IMR-90 (cell line): ENCODE measurements at regions of chr13 and their contacts with region 1.

Region 1: DNA sequence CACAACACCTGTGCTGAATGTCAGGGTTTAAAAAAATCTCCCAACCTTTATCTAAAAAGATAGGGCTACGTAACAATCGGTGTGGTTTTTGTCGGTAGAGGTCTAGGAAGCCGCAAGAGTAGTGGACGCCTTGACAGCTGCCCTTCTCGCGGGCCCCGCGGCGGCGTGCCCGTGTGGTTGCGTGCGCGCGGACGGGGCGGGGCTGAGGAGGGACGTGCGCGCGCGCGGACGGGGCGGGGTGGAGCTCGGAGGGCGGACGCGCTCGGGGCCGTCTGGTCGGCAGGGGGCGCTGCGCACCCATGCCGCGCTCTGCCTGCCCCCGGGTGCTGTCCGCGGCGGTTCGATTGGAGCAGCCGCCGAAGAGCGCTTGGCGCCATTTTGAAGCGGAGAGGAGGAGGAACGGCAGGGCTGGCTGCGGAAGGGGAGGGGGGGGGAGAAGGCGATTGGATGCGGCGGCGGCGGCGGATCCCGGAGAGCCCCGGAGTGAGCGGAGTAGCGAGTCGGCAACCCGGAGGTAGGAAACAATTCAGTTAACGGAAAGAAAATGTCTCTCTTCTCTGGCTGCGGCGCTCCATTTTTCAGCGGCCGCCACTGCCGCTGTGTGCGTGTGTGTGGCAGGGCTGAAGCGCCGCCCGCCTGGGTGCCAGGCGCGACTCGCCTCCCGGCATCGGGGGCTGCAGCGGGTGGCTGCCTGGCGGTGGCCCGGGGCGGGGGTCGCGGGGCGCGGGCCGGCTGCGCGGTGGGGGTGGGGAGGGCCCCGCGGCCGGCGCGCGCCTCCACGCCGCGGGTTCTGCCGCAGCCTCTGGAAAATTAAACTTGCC is at the start of gene PDS5B:
- DNase-seq: peak; percentile 92
- ATAC-seq: peak; percentile 91
- H3K4me3 ChIP-seq: peak within 1 kb of the TSS; percentile 65
- H3K27ac ChIP-seq: peak within 1 kb of the TSS; percentile 86
- H3K4me1 ChIP-seq: peaks cover 6% of the 10 kb centered on the region
- H3K27me3 ChIP-seq: no peaks in the 10 kb centered on the region
- CTCF ChIP-seq: peak; percentile 97
- POLR2A ChIP-seq: no peak
- RAD21 ChIP-seq: peak; percentile 90
- total RNA-seq, gene PDS5B: 20.1 and 26.7 TPM in 2 replicates

Region 2: DNA sequence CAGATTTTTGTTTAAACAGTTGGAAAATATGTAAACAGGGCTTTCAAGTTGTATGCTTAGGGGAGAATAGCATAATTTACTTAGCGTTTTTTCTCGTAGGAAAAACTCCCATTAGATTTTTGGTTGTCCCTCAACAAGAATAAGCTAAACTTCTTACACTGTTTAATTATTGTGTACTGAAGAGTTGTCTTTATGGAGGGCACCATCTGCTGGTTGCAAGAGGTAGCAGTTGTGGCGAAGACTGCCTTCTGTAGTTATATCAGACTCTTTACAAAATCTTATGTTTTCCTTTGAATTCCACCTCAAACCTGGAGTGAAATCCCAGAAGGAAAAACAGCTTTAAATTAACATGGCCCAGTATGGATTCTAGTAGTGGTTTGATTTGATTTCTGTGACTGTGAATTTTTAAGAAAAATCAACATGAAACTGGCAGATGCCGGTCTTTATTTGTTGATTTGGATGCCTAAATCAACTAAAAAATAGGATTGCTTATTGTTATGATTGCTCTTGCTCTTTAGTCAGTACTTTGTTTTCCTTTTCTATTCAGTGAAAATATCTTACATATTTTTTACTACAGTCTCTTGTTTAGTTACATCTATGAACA is 53.3 kb after region 1 on chr13:
- CTCF ChIA-PET with region 1: interaction called, 15 read pairs
- POLR2A ChIA-PET with region 1: interaction called, 8 read pairs
- dilution Hi-C with region 1: no loop called
- in situ Hi-C with region 1: no loop called
- intact Hi-C with region 1: loop called (anchors 1 kb)
- DNase-seq: peak; percentile 77
- ATAC-seq: peak; percentile 93
- H3K4me3 ChIP-seq: no peak overlapping the region
- H3K27ac ChIP-seq: no peak overlapping the region
- H3K4me1 ChIP-seq: no peaks in the 10 kb centered on the region
- H3K27me3 ChIP-seq: no peaks in the 10 kb centered on the region
- CTCF ChIP-seq: peak; percentile 77
- POLR2A ChIP-seq: no peak
- RAD21 ChIP-seq: peak; percentile 72

Region 3: DNA sequence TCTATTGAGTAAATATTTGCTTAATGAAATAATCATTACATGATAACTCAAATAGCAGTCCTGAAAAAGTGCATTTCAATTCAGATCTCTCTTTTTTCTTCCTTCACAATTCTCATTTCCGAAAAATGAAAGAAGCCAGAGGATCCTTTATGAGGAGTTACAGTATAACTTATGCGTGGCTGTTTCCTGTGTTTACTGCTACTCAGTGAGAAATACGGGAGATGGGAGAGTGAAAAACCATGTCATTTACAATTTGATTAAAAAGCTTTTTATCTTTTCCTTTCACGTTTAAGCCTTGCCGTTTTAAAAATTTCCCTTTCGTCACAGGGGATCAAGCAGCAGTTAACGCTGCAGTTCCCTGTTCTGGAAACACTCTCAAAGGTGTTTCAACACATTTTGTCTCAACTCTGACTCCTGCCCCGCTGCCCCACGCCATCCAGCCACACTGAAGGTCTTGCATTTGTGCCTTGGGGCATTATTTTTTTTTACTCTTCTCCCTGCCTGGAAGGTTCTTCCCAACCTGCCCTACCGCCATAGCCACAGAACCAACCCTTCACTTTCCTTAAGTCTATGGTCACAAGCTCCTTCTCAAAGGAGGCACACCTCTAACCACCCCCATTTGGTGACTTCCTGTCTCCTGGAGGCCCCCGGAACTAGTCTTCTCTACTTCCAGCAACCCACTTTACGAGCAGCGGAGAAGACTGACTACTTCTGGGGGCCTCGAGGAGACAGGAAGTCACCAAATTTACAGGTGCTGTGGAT is 446.9 kb after region 1 on chr13:
- CTCF ChIA-PET with region 1: no interaction called
- POLR2A ChIA-PET with region 1: no interaction called
- dilution Hi-C with region 1: no loop called
- in situ Hi-C with region 1: no loop called
- intact Hi-C with region 1: loop called (anchors 10 kb)
- DNase-seq: no peak
- ATAC-seq: no peak
- H3K4me3 ChIP-seq: no peak overlapping the region
- H3K27ac ChIP-seq: no peak overlapping the region
- H3K4me1 ChIP-seq: no peaks in the 10 kb centered on the region
- H3K27me3 ChIP-seq: peaks cover 2% of the 10 kb centered on the region; the same call in 1 of the 2 replicates
- CTCF ChIP-seq: no peak
- POLR2A ChIP-seq: no peak
- RAD21 ChIP-seq: no peak

Region 4: GRCh38 chr13:33174931-33175330 is 588.6 kb after region 1 on chr13:
- CTCF ChIA-PET with region 1: no interaction called
- POLR2A ChIA-PET with region 1: no interaction called
- dilution Hi-C with region 1: no loop called
- in situ Hi-C with region 1: no loop called
- intact Hi-C with region 1: loop called (anchors 5 kb)
- DNase-seq: peak; percentile 36
- ATAC-seq: no peak; the same call in 1 of the 2 replicates
- H3K4me3 ChIP-seq: no peak overlapping the region
- H3K27ac ChIP-seq: peak overlapping the region; percentile 66; the same call in 1 of the 2 replicates
- H3K4me1 ChIP-seq: peaks cover 22% of the 10 kb centered on the region
- H3K27me3 ChIP-seq: no peaks in the 10 kb centered on the region
- CTCF ChIP-seq: no peak
- POLR2A ChIP-seq: no peak
- RAD21 ChIP-seq: no peak

Region 5: DNA sequence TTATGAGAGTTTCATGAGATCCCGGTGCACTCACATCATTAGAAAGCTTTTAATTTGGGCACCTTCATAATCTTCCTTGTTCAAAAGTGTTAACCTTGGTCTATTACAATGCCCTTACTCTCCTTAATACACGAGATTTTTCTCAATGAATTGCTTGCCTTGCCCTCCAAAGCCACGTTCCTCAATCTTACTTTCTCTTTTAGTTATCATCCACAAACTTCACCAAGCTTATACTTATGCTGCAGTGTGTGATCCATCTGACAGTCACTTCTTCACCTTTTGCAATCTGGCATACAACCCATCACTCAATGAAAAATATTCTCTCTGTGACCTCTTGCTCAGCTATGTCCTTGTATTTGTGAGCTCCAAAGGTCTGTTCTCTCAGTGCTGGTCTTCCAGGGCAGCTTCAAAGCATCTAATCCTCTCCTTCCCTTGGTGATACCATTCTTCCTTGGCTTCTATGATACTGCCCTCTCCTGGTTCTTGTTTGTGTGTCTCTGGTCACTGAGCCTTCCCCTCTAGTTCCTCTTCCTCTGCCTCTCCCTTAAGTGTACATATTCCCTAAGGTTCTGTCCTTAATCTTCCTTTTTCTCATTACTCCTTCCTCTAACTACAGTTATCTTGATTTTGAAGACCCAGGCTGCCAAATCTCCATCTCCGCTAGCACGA is 901.4 kb after region 1 on chr13:
- CTCF ChIA-PET with region 1: no interaction called
- POLR2A ChIA-PET with region 1: no interaction called
- dilution Hi-C with region 1: no loop called
- in situ Hi-C with region 1: no loop called
- intact Hi-C with region 1: loop called (anchors 5 kb)
- DNase-seq: peak; percentile 65
- ATAC-seq: peak; percentile 91
- H3K4me3 ChIP-seq: peak overlapping the region; percentile 8; the same call in 1 of the 2 replicates
- H3K27ac ChIP-seq: no peak overlapping the region
- H3K4me1 ChIP-seq: peaks cover 1% of the 10 kb centered on the region; the same call in 1 of the 2 replicates
- H3K27me3 ChIP-seq: no peaks in the 10 kb centered on the region
- CTCF ChIP-seq: peak; percentile 52
- POLR2A ChIP-seq: no peak
- RAD21 ChIP-seq: peak; percentile 62

Region 6: GRCh38 chr13:33723772-33724435 is 1137.6 kb after region 1 on chr13:
- CTCF ChIA-PET with region 1: no interaction called
- POLR2A ChIA-PET with region 1: no interaction called
- dilution Hi-C with region 1: no loop called
- in situ Hi-C with region 1: loop called (anchors 25 kb)
- intact Hi-C with region 1: loop called (anchors 2 kb)
- DNase-seq: peak; percentile 85
- ATAC-seq: peak; percentile 94
- H3K4me3 ChIP-seq: no peak overlapping the region
- H3K27ac ChIP-seq: no peak overlapping the region
- H3K4me1 ChIP-seq: peaks cover 6% of the 10 kb centered on the region; the same call in 1 of the 2 replicates
- H3K27me3 ChIP-seq: no peaks in the 10 kb centered on the region
- CTCF ChIP-seq: peak; percentile 84
- POLR2A ChIP-seq: no peak
- RAD21 ChIP-seq: peak; percentile 88